Mammary epithelial cell (primary cell): ENCODE measurements at regions of chr7 and their contacts with region 1.

Region 1: GRCh38 chr7:26583094-26583648 is 281.2 kb downstream of the SKAP2 start:
- DNase-seq: no peak
- H3K4me3 ChIP-seq: no peak overlapping the region
- H3K27ac ChIP-seq: no peak overlapping the region
- H3K4me1 ChIP-seq: no peaks in the 10 kb centered on the region
- H3K27me3 ChIP-seq: no peaks in the 10 kb centered on the region
- CTCF ChIP-seq: no peak

Region 2: DNA sequence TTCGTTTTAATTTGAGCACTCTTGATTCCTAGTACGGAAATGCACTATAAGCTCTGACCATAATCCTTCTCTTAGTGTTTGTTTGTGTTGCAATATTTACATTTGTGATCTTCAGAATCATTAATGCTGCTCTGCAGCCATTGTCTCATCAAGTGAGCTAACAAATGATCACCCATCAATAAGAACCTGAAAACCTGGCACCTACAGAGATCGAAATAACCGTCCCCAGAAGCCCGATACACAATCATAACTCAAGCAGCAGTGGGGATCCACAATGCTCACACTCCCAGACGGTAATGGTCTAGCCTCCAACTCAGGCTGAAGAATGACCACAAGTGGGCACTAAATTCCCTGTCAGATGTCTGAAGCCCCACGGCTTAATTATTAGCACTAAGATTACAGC is 587.2 kb before region 1 on chr7:
- CTCF ChIA-PET with region 1: no interaction called
- dilution Hi-C with region 1: no loop called
- in situ Hi-C with region 1: no loop called
- intact Hi-C with region 1: no loop called
- DNase-seq: no peak
- H3K4me3 ChIP-seq: no peak overlapping the region
- H3K27ac ChIP-seq: no peak overlapping the region
- H3K4me1 ChIP-seq: no peaks in the 10 kb centered on the region
- H3K27me3 ChIP-seq: peaks cover 3% of the 10 kb centered on the region
- CTCF ChIP-seq: peak in 1 of 2 donors; percentile 7

Region 3: DNA sequence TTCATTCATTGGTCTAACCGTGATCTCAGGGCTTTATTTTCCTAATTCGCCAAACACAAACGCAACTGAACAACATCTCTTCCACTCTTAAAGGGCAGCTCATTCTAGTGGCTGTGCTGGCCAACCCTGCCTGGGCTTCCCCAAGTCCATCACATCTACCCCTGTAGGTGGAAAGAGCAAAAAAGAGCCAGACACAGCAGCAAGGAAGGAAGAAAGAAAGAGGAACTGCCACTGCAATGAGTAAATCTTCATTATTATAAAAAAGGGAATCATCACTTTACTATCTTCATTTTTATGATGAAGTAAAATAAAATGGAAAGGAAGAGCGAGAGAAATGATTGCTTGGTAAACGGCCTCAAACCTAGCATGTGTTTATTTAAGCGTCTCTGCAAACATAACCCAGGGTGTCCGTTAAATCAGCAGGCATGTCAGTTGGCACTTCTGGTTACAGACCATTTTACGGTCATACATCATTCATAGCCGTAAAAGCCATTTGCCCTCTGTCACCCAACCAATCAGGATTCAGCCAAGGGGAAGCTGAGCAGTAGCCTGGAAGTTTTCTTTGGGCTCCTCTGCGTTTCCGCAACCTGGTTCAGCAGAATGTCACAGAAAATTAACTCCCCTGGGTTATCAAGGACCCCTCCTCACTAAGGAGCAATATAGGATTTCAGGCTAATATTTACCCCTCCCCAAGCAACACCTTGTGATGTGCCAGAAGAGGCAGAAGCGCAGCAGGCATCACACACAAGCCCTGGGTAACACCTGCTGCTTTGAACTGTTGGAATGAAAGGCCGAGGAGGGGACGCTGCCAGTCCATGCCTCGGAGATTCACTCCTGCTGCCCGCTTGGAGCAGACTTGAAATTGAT is 57.5 kb before region 1 on chr7:
- CTCF ChIA-PET with region 1: no interaction called
- dilution Hi-C with region 1: no loop called
- in situ Hi-C with region 1: no loop called
- intact Hi-C with region 1: no loop called
- DNase-seq: no peak
- H3K4me3 ChIP-seq: no peak overlapping the region
- H3K27ac ChIP-seq: no peak overlapping the region
- H3K4me1 ChIP-seq: no peaks in the 10 kb centered on the region
- H3K27me3 ChIP-seq: no peaks in the 10 kb centered on the region
- CTCF ChIP-seq: no peak

Region 4: GRCh38 chr7:26627891-26628341 is 44.7 kb after region 1 on chr7:
- CTCF ChIA-PET with region 1: no interaction called
- dilution Hi-C with region 1: loop called (anchors 5 kb)
- in situ Hi-C with region 1: no loop called
- intact Hi-C with region 1: no loop called
- DNase-seq: no peak
- H3K4me3 ChIP-seq: no peak overlapping the region
- H3K27ac ChIP-seq: no peak overlapping the region
- H3K4me1 ChIP-seq: no peaks in the 10 kb centered on the region
- H3K27me3 ChIP-seq: no peaks in the 10 kb centered on the region
- CTCF ChIP-seq: no peak

Region 5: DNA sequence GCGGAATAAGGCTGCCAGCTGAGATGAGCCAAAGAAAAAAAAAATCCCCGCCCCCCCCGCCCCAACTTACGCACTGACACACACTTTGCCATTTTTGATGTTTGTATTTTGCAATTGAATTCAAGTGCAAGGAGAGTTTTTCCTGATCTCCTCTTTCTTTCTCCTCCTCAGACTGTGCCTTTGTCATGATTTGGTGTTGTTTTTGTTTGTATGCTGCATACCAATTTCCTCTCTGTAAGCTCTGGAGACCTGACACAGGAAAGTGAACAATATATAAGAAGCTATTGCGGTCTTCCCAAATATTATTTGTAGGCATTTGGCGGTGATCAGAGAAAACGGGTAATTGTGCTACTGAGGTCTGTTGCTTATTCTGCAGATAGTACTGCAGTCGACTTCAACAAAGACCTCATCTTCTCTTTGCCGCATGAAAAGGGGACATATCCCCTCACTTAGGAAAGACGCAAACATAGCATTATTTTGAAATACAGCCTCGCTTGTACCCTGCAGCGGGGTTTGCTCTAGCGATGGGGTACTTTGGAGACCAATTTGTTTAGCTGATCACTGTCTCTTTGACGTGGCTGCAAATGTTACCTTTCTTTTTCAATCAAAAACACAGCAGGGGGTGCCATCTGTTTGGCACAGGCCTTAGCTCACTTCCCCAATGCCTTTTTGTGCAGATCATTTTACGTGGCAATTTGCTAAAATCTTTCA is 74.7 kb after region 1 on chr7:
- CTCF ChIA-PET with region 1: no interaction called
- dilution Hi-C with region 1: loop called (anchors 5 kb)
- in situ Hi-C with region 1: no loop called
- intact Hi-C with region 1: no loop called
- DNase-seq: no peak
- H3K4me3 ChIP-seq: no peak overlapping the region
- H3K27ac ChIP-seq: no peak overlapping the region
- H3K4me1 ChIP-seq: no peaks in the 10 kb centered on the region
- H3K27me3 ChIP-seq: no peaks in the 10 kb centered on the region
- CTCF ChIP-seq: no peak